WTC11 (cell line): ENCODE measurements at regions of chr1 and their contacts with region 1.

Region 1: DNA sequence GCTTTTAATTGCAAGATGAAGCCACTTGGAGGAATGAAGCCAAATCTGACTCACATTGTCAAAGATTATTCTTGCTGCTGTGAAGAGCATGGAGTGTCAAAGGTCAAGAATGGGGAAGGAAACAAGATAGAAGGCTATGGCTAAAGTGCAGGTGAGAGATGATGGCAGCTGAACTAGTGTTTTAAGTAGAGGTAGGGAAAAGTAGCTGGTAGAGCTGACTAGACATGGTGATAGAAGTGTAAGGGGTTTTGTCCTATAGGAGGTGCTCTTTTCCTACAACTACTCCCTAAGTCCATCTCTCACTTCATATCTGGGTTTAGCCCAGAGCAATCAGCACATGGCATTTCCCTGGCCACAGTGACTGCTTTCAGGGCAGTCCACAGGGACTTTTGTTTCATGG is 11.8 kb downstream of the UBE2T start:
- DNase-seq: no peak
- ATAC-seq: peak; percentile 87
- H3K4me3 Mint-ChIP-seq: no peak overlapping the region
- H3K27ac Mint-ChIP-seq: peak overlapping the region; percentile 38; the same call in 1 of the 2 replicates
- H3K4me1 Mint-ChIP-seq: no peaks in the 10 kb centered on the region
- H3K27me3 Mint-ChIP-seq: no peaks in the 10 kb centered on the region
- CTCF ChIP-seq: peak; percentile 22; the same call in 1 of the 2 replicates

Region 2: GRCh38 chr1:202205491-202206190 is 124.2 kb before region 1 on chr1:
- CTCF ChIA-PET with region 1: no interaction called
- POLR2A ChIA-PET with region 1: no interaction called
- DNase-seq: peak; percentile 71
- ATAC-seq: peak; percentile 22; the same call in 1 of the 2 replicates
- H3K4me3 Mint-ChIP-seq: no peak overlapping the region
- H3K27ac Mint-ChIP-seq: no peak overlapping the region
- H3K4me1 Mint-ChIP-seq: 0 out of 2 replicates have a peak, but pooled peaks cover 3% of the 10 kb centered on the region
- H3K27me3 Mint-ChIP-seq: no peaks in the 10 kb centered on the region; the same call in 1 of the 2 replicates
- CTCF ChIP-seq: peak; percentile 33; the same call in 1 of the 2 replicates

Region 3: GRCh38 chr1:202315576-202316168 is 14.2 kb before region 1 on chr1:
- CTCF ChIA-PET with region 1: interaction called, 13 read pairs
- POLR2A ChIA-PET with region 1: no interaction called
- DNase-seq: peak; percentile 90
- ATAC-seq: peak; percentile 97
- H3K4me3 Mint-ChIP-seq: no peak overlapping the region
- H3K27ac Mint-ChIP-seq: no peak overlapping the region
- H3K4me1 Mint-ChIP-seq: peaks cover 15% of the 10 kb centered on the region
- H3K27me3 Mint-ChIP-seq: no peaks in the 10 kb centered on the region
- CTCF ChIP-seq: peak; percentile 74; the same call in 1 of the 2 replicates